Activated T-helper 2 cell treated with anti-CD3 and anti-CD28 coated beads, Interferon-gamma antibody, Interleukin-2, Interleukin-4, amounts not matched to agents 10 μg/mL and 5 μg/mL and 100 μg/mL, durations not matched to agents 14 hours and 24 hours and 36 hours (primary cell): ENCODE measurements at regions of chr1 and their contacts with region 1.

Region 1: GRCh38 chr1:205919026-205919746 is 24.1 kb downstream of the SLC26A9 start:
- DNase-seq: peak; percentile 54
- H3K4me3 Mint-ChIP-seq: no peak overlapping the region
- H3K27ac Mint-ChIP-seq: no peak overlapping the region
- H3K4me1 Mint-ChIP-seq: no peaks in the 10 kb centered on the region
- H3K27me3 Mint-ChIP-seq: no peaks in the 10 kb centered on the region

Region 2: DNA sequence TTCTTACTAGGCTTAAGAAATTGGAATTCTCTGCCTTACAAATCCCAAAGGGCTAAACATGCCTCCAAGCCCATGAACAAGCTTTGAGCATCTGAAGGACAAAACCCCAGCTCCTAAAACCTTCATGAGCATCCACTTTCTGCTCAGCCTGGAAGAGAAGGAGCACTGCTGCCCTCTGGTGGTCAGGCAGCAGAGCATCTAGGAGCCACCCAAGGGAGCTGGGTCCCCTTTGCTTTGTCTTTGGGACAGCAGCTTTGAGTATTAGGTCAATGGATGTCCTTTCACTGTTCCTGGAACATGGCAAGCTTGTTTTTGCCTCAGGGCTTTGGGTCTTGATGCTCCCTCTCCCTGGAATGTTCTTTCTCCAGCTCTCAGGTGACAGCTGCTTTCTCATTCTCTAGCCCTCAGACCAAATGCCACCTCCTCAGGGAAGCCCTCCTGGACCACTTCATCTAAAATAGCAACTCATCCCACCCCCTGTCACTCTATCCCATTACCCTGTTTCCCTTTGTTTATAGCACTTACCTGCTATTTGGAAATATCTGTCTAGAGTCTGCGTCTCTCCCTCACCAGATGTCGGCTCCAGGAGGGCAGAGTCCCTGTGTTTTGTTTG is 58.3 kb after region 1 on chr1:
- intact Hi-C with region 1: loop called (anchors 1 kb)
- DNase-seq: peak; percentile 56
- H3K4me3 Mint-ChIP-seq: no peak overlapping the region
- H3K27ac Mint-ChIP-seq: no peak overlapping the region
- H3K4me1 Mint-ChIP-seq: no peaks in the 10 kb centered on the region
- H3K27me3 Mint-ChIP-seq: peaks cover 3% of the 10 kb centered on the region